ENCODE measurements at regions of chr18 and their contacts with region 1.

Region 1: DNA sequence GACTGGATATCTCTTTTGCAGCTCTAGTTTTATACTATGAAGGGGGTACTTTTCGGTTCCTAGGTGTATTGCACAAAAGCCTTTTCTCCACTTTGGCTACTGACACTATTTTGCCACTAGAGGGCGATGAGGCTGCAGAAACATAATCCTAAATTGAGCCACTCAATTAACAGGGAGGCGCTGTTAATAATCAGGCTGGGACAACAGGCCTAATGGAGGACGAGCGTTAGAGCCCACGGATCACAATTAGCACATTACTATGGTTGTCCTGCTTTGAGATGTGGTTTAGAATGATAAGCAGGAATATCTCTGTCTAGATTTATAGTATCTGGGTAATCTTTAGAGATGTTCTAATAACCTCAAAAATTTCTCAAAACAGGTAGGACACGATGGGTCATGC is 62.2 kb upstream of the PMAIP1 start:
- DNase-seq: no peak
- H3K4me3 ChIP-seq: no peak overlapping the region
- H3K27me3 ChIP-seq: peaks cover 2% of the 10 kb centered on the region; the same call in 1 of the 2 replicates
- CTCF ChIP-seq: peak; percentile 91

Region 2: GRCh38 chr18:59851784-59852399 is 14.3 kb after region 1 on chr18:
- CTCF ChIA-PET with region 1: interaction called, 10 read pairs
- POLR2A ChIA-PET with region 1: no interaction called
- DNase-seq: no peak
- H3K4me3 ChIP-seq: no peak overlapping the region
- H3K27me3 ChIP-seq: no peaks in the 10 kb centered on the region
- CTCF ChIP-seq: no peak

Measured in BJ (cell line).